ENCODE measurements at regions of chr1 and their contacts with region 1.

Region 1: GRCh38 chr1:169546087-169546995 is 39.9 kb downstream of the F5 start:
- DNase-seq: peak; percentile 45
- H3K4me3 ChIP-seq: no peak overlapping the region
- H3K27ac ChIP-seq: no peak overlapping the region
- H3K27me3 ChIP-seq: no peaks in the 10 kb centered on the region
- CTCF ChIP-seq: peak; percentile 82

Region 2: GRCh38 chr1:168603501-168604110 is 942.7 kb before region 1 on chr1:
- CTCF ChIA-PET with region 1: interaction called, 25 read pairs
- POLR2A ChIA-PET with region 1: no interaction called
- DNase-seq: no peak
- H3K4me3 ChIP-seq: no peak overlapping the region
- H3K27ac ChIP-seq: no peak overlapping the region
- H3K27me3 ChIP-seq: no peaks in the 10 kb centered on the region
- CTCF ChIP-seq: peak; percentile 73

Region 3: DNA sequence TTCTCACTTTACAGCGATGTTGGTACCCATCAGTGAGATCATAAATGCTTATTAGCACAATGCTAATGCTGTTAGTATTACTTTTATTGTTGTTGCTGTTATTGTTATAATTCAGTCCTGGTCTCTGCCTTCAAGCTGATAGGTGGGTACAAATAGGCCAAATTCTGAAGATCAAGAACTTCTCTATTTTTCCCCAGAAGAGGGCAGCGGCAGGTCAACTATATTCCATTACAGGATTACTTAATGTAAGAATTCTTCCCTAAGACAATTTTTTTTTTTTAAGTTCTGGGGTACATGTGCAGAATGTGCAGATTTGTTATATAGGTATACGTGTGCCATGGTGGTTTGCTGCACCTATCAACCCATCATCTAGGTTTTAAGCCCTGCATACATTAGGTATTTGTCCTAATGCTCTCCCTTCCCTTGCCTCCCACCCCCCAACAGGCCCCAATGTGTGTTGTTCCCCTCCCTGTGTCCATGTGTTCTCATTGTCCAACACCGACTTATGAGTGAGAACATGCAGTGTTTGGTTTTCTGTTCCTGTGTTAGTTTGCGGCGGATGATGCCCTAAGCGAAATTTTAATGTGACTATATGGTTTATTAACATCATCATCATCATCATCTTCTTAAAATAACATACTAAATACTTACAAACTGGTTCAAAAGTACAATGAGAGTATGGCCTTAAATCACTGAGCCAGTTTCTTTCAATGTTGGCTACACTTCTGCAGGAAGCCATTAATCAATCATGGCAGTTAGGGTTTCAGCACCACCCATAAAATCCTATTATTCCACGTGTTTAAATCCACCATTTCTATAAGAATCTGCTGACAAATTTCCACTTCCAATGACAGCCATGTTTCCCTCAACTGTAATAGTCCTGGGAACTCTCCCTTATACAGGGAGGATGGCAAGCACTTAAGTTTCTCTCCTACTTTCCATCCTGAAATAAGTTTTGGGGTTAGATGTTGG is 79.8 kb before region 1 on chr1:
- CTCF ChIA-PET with region 1: interaction called, 42 read pairs
- POLR2A ChIA-PET with region 1: no interaction called
- DNase-seq: no peak
- H3K4me3 ChIP-seq: no peak overlapping the region
- H3K27ac ChIP-seq: no peak overlapping the region
- H3K27me3 ChIP-seq: no peaks in the 10 kb centered on the region
- CTCF ChIP-seq: peak; percentile 49

Region 4: DNA sequence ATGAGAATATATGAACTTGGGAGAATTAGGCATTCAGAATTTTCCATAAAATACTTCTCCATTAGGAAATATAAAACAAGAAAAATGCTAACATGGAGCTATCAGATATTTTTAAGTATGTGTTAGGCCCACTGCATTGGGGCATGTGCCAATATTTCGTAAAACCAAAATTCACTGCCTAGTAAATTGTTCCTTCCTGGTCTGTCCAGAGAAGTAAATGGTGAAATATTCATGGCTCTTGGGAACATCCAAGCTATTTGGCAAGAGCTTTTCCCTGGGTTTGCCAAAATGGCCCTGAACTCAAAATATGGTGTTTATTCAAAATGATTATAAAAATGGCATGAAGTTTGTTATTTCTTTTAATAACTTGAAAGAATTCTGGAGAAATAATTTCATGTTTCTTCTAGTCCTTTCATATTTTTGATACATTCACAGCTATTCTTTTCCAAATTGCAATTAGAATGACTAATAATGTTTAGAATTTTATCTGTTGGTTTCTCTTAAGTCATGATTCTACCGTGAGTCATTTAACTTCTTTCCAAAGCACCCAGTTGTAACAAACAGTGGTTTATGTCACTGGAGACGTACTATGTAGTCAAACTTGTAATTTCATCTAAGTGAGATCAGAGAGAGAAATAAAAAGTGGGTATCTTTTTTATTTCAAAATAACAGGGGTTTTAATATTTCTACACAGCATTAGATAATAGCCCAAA is 34.9 kb before region 1 on chr1:
- CTCF ChIA-PET with region 1: interaction called, 11 read pairs
- POLR2A ChIA-PET with region 1: no interaction called
- DNase-seq: peak; percentile 29
- H3K4me3 ChIP-seq: no peak overlapping the region
- H3K27ac ChIP-seq: no peak overlapping the region
- H3K27me3 ChIP-seq: no peaks in the 10 kb centered on the region
- CTCF ChIP-seq: no peak

Region 5: DNA sequence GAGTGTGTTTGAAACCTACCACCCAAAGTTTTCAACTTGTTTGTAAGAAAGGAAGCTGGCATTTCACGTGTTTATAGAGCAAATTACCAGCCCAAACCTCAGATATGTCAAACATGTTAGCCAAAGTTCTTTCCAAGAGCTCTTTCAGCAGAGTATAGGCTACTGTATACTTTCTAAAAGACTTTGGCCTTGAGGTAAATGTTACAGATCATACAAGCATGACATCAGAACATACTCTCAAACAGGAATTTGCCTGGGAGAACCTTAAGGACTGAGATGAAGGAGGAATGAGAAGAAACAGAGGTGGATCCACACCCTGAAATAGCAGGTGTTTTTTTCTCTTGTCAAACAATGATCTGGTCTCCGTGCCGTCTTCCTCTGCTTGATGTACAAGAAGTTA is 13.7 kb after region 1 on chr1:
- CTCF ChIA-PET with region 1: interaction called, 14 read pairs
- POLR2A ChIA-PET with region 1: no interaction called
- DNase-seq: no peak
- H3K4me3 ChIP-seq: no peak overlapping the region
- H3K27ac ChIP-seq: no peak overlapping the region
- H3K27me3 ChIP-seq: no peaks in the 10 kb centered on the region
- CTCF ChIP-seq: no peak

Region 6: DNA sequence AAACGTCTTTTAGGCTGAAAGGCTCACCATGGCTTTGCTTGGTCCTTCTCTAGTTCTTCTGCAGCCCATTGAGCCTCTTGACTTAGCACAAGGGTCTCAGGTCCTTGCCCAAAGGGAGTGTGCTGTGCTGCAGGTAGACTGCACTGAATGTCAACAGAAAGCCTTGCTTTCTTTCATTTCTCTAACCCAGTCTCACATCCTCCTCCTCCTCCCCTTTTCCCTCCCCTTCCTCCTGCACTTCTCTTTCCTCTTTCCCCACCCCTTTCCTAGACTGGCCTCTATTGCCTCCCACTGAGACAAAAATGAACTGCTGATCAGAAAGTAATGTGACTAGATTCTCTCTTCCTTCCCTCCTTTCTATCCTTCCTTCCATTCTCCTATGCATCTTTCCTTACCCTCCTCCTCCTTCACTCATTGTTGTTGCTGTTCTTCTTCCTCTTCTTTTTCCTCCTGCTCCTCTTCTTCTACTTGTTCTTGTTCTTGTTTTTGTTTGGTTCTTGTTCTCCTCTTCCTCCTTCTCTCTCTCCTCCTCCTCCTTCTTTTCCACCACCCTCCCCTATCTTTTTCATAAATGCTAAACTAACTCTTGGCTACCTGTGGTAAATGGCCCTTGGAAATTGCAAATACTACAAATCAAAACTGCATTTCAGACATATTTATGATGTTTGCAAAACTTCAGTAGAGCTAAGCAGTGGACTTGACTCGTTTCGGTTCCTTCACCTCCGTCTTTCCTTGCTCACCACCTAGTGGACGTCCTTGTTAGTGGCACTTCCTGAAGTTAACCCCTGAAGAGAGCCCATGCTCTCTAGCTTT is 165.3 kb after region 1 on chr1 and contains the start of gene SELL:
- CTCF ChIA-PET with region 1: interaction called, 15 read pairs
- POLR2A ChIA-PET with region 1: no interaction called
- DNase-seq: peak; percentile 26
- H3K4me3 ChIP-seq: peak within 1 kb of the TSS; percentile 42
- H3K27ac ChIP-seq: no peak within 1 kb of the TSS
- H3K27me3 ChIP-seq: no peaks in the 10 kb centered on the region
- CTCF ChIP-seq: peak; percentile 88
- polyA plus RNA-seq, gene SELL: 0.05 TPM in 1 of 2 replicates, not detected in the other

Region 7: GRCh38 chr1:169809370-169810095 is 263.2 kb after region 1 on chr1:
- CTCF ChIA-PET with region 1: interaction called, 31 read pairs
- POLR2A ChIA-PET with region 1: no interaction called
- DNase-seq: peak; percentile 4
- H3K4me3 ChIP-seq: no peak overlapping the region
- H3K27ac ChIP-seq: no peak overlapping the region
- H3K27me3 ChIP-seq: no peaks in the 10 kb centered on the region
- CTCF ChIP-seq: peak; percentile 48